B cell (primary cell): ENCODE measurements at regions of chr2 and their contacts with region 1.

Region 1: GRCh38 chr2:182724656-182725055 is 8.6 kb downstream of the DNAJC10 start:
- DNase-seq: no peak
- ATAC-seq: no peak
- H3K4me3 ChIP-seq: no peak overlapping the region
- H3K4me3 Mint-ChIP-seq: no peak overlapping the region
- H3K27ac ChIP-seq: no peak overlapping the region
- H3K27ac Mint-ChIP-seq: no peak overlapping the region
- H3K4me1 ChIP-seq: no peaks in the 10 kb centered on the region
- H3K4me1 Mint-ChIP-seq: peaks cover 28% of the 10 kb centered on the region
- H3K27me3 ChIP-seq: no peaks in the 10 kb centered on the region
- H3K27me3 Mint-ChIP-seq: no peaks in the 10 kb centered on the region
- CTCF ChIP-seq: no peak

Region 2: DNA sequence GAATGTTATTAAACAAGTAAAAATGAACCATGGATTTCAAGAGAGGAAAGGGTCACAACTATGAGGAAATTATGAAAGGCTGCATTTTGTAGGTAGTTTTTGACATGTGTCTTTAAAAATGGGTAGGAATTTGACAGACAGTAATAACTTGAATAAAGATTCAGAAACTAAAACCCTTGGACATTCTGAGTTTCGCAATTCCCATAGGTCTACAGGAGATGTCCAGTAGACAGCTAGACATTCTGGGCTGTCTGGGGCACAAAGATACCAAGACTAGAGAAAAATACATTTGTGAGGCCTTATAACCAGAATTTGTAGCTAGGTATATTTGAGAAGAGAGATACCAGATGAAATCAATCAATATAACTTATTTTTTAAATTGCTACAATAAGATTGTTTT is 33.7 kb after region 1 on chr2:
- CTCF ChIA-PET with region 1: no interaction called
- POLR2A ChIA-PET with region 1: no interaction called
- intact Hi-C with region 1: loop called (anchors 5 kb)
- DNase-seq: no peak
- ATAC-seq: no peak
- H3K4me3 ChIP-seq: no peak overlapping the region
- H3K4me3 Mint-ChIP-seq: no peak overlapping the region
- H3K27ac ChIP-seq: peak overlapping the region in 1 of 2 donors; percentile 35
- H3K27ac Mint-ChIP-seq: peak overlapping the region; percentile 20
- H3K4me1 ChIP-seq: no peaks in the 10 kb centered on the region
- H3K4me1 Mint-ChIP-seq: no peaks in the 10 kb centered on the region
- H3K27me3 ChIP-seq: no peaks in the 10 kb centered on the region
- H3K27me3 Mint-ChIP-seq: no peaks in the 10 kb centered on the region
- CTCF ChIP-seq: no peak